Lower leg skin (tissue), 4 donors: ENCODE measurements at regions of chr22 and their contacts with region 1.

Region 1: DNA sequence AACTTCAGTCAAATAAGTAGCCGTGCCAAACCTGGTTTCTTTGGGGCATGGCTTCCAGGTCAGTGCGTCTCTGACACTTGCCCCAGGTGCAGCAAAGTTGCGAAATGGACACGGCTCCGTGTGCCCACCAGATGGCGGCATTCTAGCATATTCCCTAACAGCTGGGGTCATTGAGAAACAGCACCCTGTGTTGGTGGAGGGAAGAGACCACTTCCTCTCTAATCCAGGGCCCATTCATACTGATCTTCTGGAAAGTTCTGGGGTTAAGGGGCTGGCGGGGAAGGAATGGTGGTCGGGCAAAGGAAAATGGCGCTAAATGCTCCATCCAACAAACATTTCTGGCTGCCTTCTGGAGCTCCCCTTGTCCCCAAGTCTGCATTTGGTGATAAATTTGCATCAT is 141.2 kb upstream of the TIMP3 start:
- DNase-seq: peak; percentile 44 to 90
- H3K4me3 ChIP-seq: no peak overlapping the region
- CTCF ChIP-seq: peak in 1 of 3 donors; percentile 67
- POLR2A ChIP-seq: no peak

Region 2: DNA sequence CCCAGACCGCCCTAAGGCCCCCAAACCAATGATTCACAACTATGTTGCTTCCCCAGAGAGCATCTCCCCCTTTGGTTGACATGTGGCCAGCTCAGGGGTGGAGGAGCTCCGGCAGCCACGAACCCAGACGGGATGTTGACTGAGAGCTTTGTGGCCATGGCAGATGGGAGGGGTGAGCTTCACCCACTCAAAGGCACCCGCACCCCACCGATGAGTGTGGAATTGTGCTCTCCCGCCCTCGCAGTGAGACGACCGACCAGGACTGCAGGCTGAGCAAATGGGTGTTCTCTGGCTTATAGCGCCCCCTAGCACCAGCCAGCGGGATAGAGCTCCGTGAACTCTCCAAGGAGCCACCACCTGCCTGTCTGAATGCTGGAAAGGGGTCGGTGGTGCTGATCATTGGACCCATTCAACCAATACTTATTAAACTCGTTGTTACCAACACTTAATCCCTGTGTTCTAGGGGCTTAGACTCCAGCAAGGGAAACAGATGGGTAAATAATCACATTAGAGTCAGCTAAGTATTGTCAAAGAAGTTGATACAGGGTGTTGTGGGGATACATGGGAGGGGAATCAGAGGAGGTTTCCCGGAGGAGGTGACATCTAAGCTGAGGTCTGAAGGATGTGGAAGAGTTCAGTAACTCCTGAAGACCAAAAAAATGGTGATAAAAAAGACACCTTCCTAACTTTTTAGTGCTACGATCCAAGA is 136.7 kb after region 1 on chr22:
- intact Hi-C with region 1: loop called (anchors 10 kb)
- DNase-seq: peak; percentile 56 to 94
- H3K4me3 ChIP-seq: no peak overlapping the region
- CTCF ChIP-seq: peak in 1 of 3 donors; percentile 97
- POLR2A ChIP-seq: no peak